ENCODE measurements at regions of chr11 and their contacts with region 1.

Region 1: GRCh38 chr11:4881860-4882500 is at the start of gene OR51T1:
- DNase-seq: no peak
- ATAC-seq: no peak
- H3K4me3 ChIP-seq: no peak within 1 kb of the TSS
- H3K27ac ChIP-seq: no peak within 1 kb of the TSS
- H3K4me1 ChIP-seq: no peaks in the 10 kb centered on the region
- H3K27me3 ChIP-seq: peaks cover 0 to 3% of the 10 kb centered on the region in 2 experiments; a peak in 1 of 5 replicates
- CTCF ChIP-seq: no peak
- EP300 ChIP-seq: no peak
- POLR2A ChIP-seq: no peak
- RAD21 ChIP-seq: no peak
- total RNA-seq, gene OR51T1: not detected in 2 replicates

Region 2: GRCh38 chr11:4863876-4864275 is 18.1 kb before region 1 on chr11:
- CTCF ChIA-PET with region 1: no interaction called
- POLR2A ChIA-PET with region 1: no interaction called
- in situ Hi-C with region 1: no loop called
- intact Hi-C with region 1: loop called (anchors 1 kb)
- DNase-seq: no peak
- ATAC-seq: no peak
- H3K4me3 ChIP-seq: no peak overlapping the region
- H3K27ac ChIP-seq: no peak overlapping the region
- H3K4me1 ChIP-seq: no peaks in the 10 kb centered on the region
- H3K27me3 ChIP-seq: no peaks in the 10 kb centered on the region
- CTCF ChIP-seq: no peak
- EP300 ChIP-seq: no peak
- POLR2A ChIP-seq: no peak
- RAD21 ChIP-seq: no peak